Psoas muscle (tissue), 8 donors: ENCODE measurements at regions of chr9 and their contacts with region 1.

Region 1: DNA sequence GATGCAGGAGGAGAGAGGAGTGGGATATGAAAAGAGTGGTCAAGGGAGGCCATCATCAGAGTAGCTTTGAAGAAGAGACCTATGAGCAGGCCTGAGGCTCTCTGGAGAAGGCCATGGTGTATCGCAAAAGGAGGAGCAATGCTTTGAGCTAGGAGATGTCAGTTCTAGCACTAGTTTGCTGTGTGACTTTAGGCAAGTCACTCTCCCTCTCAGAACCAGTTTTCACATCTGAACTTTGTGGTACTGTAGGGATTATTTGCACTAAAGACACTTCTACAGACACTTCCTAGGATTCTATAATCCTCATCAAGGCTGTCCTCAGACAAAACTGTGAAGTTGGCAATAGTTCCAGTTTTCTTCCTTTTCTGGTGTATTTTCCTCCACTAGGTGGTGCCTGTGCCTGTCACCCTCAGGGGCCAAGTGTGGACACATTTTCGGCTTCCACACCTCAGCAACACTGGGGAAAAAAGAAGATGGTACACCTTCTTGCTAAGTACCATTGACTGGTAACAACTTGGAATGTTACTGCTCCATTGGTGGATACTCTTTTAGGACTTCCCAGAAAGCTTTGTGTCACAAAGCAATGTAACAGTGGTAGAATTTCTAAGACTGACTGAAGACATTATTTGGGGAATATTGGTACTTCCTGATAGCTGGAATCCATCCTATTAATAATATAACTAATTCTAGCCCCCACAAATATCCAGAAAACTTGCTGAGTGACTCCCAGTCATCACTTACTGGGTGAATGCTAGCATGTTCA is 9.9 kb downstream of the PAPPA start:
- DNase-seq: peak in 1 of 2 donors; percentile 41
- ATAC-seq: peak; percentile 40 to 66 (median 46)
- H3K4me3 ChIP-seq: no peak overlapping the region
- H3K27ac ChIP-seq: no peak overlapping the region
- H3K4me1 ChIP-seq: no peaks in the 10 kb centered on the region
- H3K27me3 ChIP-seq: no peaks in the 10 kb centered on the region
- CTCF ChIP-seq: peak; percentile 49

Region 2: DNA sequence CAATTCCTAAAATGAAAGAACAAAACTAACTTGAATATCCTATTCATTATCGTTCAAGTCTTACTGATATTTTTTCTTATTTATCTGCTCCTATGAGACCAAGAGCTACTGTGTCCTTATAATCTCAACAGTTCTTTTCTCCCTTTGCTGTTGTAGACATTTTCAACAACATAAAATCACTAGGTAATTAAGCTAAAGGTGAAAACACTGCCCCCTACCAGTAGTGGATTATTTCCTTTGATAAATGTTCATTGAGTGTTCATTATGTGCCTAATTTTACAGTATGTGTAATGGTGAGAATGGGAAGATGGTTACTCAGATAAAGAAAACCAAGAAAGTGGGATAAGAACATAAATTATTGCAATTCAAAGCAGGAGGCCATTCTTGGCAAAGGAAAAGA is 51.2 kb before region 1 on chr9:
- intact Hi-C with region 1: no loop called
- DNase-seq: no peak
- ATAC-seq: no peak
- H3K4me3 ChIP-seq: no peak overlapping the region
- H3K27ac ChIP-seq: no peak overlapping the region
- H3K4me1 ChIP-seq: no peaks in the 10 kb centered on the region
- H3K27me3 ChIP-seq: no peaks in the 10 kb centered on the region
- CTCF ChIP-seq: peak; percentile 9

Region 3: GRCh38 chr9:116566677-116567488 is 403.4 kb after region 1 on chr9:
- intact Hi-C with region 1: loop called in 1 of 2 experiments (anchors 5 kb)
- DNase-seq: no peak
- ATAC-seq: no peak
- H3K4me3 ChIP-seq: no peak overlapping the region
- H3K27ac ChIP-seq: no peak overlapping the region
- H3K4me1 ChIP-seq: no peaks in the 10 kb centered on the region
- H3K27me3 ChIP-seq: no peaks in the 10 kb centered on the region
- CTCF ChIP-seq: no peak

Region 4: DNA sequence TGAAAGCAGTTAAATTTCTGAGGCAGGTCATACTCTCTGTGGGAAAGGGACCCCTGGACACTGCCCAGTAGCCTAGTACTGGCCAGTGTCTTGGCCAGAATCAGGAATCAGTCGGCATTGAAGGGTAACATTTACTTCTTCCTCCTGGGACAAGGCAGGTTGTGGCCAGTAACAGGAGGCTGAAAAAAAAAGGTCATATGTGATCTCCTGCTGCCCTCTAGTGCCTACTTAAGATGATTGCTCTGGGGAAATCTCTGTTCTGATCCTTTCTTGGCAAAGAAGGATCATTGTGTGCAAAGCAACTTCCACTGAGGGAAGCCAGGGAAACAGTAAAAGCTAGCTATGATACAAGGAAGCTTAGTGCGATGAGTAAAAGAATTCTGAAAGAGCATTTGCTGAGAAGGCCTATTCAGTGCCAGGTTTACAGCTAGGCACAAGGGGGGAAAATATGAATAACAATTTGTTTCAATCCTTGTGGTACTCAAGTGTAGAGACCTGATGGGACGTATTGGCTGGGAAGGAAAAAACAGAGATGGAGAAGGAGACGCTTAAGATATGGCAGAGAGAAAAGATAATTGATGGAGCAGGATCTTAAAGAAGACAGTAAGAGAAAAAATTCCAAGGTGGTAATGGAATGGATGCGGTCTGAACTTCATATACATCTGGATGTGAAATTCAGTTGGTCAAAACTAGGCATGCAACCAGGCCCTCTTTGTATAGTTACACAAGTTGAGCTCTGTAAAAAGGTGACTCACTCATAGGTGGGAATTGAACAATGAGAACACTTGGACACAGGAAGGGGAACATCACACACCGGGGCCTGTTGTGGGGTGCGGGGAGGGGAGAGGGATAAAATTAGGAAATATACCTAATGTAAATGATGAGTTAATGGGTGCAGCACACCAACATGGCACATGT is 497.8 kb after region 1 on chr9:
- intact Hi-C with region 1: loop called in 1 of 2 experiments (anchors 5 kb)
- DNase-seq: no peak
- ATAC-seq: peak; percentile 78 to 95 (median 90)
- H3K4me3 ChIP-seq: no peak overlapping the region
- H3K27ac ChIP-seq: no peak overlapping the region
- H3K4me1 ChIP-seq: peaks cover 10% of the 10 kb centered on the region
- H3K27me3 ChIP-seq: no peaks in the 10 kb centered on the region
- CTCF ChIP-seq: peak; percentile 78